ENCODE measurements at regions of chrX and their contacts with region 1.

Region 1: GRCh38 chrX:118603981-118604380 is 108.4 kb downstream of the DOCK11 start:
- DNase-seq: peak; percentile 41
- ATAC-seq: peak; percentile 77
- H3K4me3 Mint-ChIP-seq: no peak overlapping the region
- H3K27ac Mint-ChIP-seq: no peak overlapping the region
- H3K4me1 Mint-ChIP-seq: peaks cover 3% of the 10 kb centered on the region; the same call in 1 of the 2 replicates
- H3K27me3 Mint-ChIP-seq: no peaks in the 10 kb centered on the region
- CTCF ChIP-seq: peak; percentile 27; the same call in 1 of the 2 replicates

Region 2: DNA sequence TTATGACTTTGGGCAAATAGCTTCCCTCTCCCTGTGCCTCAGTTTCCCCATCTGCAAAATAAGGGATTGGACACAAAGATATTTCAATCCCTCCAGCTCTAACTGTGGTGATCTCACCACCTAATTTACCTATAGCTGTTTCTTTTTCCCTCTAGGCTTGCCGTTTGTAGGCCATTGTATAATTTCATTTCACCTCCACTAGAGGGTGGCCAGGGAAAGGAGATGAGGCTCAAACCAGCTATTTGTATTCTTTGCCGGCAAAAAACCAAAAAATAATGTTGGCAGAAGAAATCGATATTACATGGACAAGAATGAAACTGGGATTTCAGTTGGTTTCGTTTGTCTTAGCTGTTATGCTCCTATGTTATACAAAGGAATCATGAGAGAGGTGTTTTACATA is 144.5 kb before region 1 on chrX:
- CTCF ChIA-PET with region 1: interaction called, 50 read pairs
- POLR2A ChIA-PET with region 1: no interaction called
- DNase-seq: no peak
- ATAC-seq: peak; percentile 77
- H3K4me3 Mint-ChIP-seq: no peak overlapping the region
- H3K27ac Mint-ChIP-seq: no peak overlapping the region
- H3K4me1 Mint-ChIP-seq: 0 out of 2 replicates have a peak, but pooled peaks cover 4% of the 10 kb centered on the region
- H3K27me3 Mint-ChIP-seq: no peaks in the 10 kb centered on the region; the same call in 1 of the 2 replicates
- CTCF ChIP-seq: no peak